ENCODE measurements at regions of chr4 and their contacts with region 1.

Region 1: DNA sequence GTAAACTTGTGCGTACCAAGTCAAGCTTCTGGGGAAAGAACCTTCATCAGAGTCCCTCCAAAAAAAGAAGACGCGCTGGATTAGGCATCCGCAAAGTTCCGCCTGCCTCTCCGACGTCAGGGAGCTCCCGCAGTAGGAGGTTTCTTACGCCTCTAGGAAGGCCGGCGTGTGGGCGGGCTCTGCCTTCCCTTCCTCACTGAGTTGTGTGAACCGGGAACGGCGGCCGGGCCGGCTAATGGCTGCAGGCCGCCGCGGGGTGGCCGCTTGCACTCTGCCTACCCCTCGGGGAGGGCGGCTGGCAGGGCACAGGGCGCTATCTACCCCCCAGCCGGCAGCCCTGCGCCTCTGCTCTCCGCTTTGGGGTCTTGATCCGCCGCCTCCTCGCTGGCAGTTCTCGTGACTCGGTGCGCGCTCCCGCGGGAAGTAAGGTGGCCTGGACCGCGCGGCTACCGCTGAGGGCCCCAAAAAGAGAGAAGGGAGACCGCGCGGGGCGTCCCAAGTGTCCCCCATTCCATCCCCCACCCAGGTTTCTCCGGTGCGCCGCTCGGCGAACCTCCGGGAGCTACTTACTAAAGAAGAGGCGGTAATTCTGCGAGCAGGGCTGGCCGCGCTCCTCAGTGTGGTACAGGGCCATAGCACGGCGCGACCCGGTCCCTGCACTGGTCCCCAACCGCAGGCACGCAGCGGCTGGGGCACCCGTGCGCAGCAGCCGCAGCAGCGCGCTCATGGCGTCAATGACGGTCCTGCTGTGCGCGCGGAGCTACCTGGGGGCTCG is at the start of gene PPA2:
- DNase-seq: peak; percentile 84 to 96 (median 94)
- H3K4me3 ChIP-seq: peak within 1 kb of the TSS; percentile 63 to 95 (median 88)
- H3K27ac ChIP-seq: peak within 1 kb of the TSS; percentile 94 to 96
- H3K4me1 ChIP-seq: peaks cover 16 to 29% (median 21%) of the 10 kb centered on the region in 4 experiments
- H3K27me3 ChIP-seq: no peaks in the 10 kb centered on the region

Region 2: GRCh38 chr4:104641427-104641826 is 832.1 kb before region 1 on chr4:
- CTCF ChIA-PET with region 1: no interaction called
- POLR2A ChIA-PET with region 1: no interaction called
- DNase-seq: no peak
- H3K4me3 ChIP-seq: no peak overlapping the region
- H3K27ac ChIP-seq: no peak overlapping the region
- H3K4me1 ChIP-seq: no peaks in the 10 kb centered on the region
- H3K27me3 ChIP-seq: no peaks in the 10 kb centered on the region

Region 3: GRCh38 chr4:105461221-105461620 is 12.3 kb before region 1 on chr4:
- CTCF ChIA-PET with region 1: interaction called, 25 read pairs
- POLR2A ChIA-PET with region 1: interaction called, 10 read pairs
- DNase-seq: peak; percentile 46 to 78 (median 62)
- H3K4me3 ChIP-seq: peak overlapping the region in 3 of 7 experiments; percentile 41 to 54 (median 50)
- H3K27ac ChIP-seq: peak overlapping the region; percentile 53 to 68
- H3K4me1 ChIP-seq: peaks cover 3 to 19% (median 9%) of the 10 kb centered on the region in 4 experiments
- H3K27me3 ChIP-seq: no peaks in the 10 kb centered on the region